Activated T-helper 2 cell treated with anti-CD3 and anti-CD28 coated beads, Interferon-gamma antibody, Interleukin-2, Interleukin-4, amounts not matched to agents 10 μg/mL and 5 μg/mL and 100 μg/mL, durations not matched to agents 14 hours and 24 hours and 36 hours (primary cell): ENCODE measurements at regions of chr9 and their contacts with region 1.

Region 1: DNA sequence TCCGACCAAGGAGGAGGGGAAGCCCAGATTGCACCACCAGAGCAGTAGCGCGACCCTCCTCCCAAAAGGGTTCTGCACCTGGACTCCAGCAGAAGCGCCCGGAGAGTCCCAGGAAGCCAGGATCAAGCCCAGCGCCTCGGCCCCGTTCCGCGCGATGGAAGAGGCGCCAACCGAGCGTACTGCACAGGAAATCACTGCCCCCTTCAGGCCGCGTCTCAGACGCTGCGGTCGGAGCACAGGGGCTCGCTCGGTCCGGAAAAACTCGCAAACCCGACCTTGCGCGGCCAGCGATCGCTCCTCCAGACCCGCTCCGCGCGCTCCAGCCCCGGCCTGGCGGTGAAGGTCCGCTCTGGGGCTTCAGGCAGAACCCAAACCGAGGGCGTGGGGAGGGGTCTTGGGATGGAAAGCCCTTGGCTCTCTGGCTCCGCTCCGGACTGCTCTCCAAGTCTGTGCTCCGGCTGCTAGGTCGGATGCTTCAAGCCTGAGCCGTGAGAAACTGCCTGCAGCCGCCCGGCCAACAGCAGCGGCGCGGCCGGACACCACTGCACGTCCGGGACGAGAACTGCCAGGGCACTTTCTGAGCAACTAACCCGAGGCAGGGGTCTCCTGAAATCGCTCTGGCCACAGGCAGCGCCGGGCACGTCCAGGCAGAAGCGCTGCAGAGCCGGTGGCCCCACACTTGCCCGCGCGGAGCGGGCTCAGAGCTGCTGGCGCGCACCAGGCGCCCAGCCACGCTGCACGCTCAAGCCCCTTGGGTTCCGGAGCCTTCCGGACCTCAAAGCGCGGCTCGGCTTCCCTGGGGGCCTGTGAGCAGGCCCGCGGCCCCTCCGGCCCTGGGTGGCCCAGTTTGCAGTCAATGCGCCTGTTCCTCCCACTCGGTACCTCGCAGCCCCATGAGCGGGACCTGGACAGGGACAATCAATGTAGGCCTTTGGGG is 1.3 kb downstream of the GABBR2 start:
- DNase-seq: no peak
- H3K4me3 Mint-ChIP-seq: no peak overlapping the region
- H3K27ac Mint-ChIP-seq: no peak overlapping the region
- H3K4me1 Mint-ChIP-seq: no peaks in the 10 kb centered on the region
- H3K27me3 Mint-ChIP-seq: peaks cover 56% of the 10 kb centered on the region

Region 2: GRCh38 chr9:98944057-98944733 is 236.8 kb after region 1 on chr9:
- intact Hi-C with region 1: loop called (anchors 10 kb)
- DNase-seq: no peak
- H3K4me3 Mint-ChIP-seq: no peak overlapping the region
- H3K27ac Mint-ChIP-seq: no peak overlapping the region
- H3K4me1 Mint-ChIP-seq: no peaks in the 10 kb centered on the region
- H3K27me3 Mint-ChIP-seq: peaks cover 67% of the 10 kb centered on the region